Lower leg skin (tissue), 4 donors: ENCODE measurements at regions of chr9 and their contacts with region 1.

Region 1: DNA sequence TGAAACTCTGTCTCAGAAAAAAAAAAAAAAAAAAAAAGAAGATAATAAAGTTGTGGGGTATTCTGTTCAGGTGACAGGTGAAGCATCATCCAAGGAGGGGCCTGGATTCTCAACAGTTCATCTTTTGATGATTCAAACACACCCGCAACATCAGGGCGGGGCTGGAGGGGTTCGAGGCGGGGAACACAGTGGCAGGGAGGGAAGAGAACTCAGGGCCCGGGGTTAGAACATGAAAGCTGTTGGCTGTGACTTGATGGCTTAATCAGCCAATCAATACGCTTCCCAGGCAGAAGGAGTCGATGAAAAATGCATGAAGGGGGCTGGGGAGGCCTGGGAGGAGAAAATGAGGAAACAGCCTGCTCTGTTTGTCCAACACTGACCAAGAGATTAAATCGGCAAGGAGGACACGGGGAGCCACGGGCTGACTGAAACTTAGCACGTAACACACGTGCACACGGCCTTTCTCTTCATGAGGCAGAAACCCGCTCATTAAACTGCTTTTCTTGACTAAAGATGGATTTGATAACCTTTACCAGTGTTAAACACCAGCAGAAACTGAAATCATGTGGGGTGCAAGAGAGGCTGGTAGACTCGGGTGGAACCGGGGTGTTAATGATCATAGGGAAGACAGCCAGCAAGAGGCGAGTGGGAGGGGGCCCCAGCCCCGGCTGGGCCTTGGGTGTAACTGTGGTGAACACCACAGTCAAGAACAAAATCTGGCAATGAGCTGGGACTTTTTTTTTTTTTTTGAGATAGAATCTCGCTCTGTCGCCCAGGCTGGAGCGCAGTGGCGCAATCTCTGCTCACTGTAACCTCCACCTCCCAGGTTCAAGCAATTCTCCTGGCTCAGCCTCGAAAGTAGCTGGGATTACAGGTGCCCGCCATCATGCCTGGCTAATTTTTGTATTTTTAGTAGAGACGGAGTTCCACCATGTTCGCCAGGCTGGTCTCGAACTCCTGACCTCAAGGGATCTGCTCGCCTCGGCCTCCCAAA is 105.7 kb upstream of the RAPGEF1 start:
- DNase-seq: no peak
- H3K4me3 ChIP-seq: no peak overlapping the region
- CTCF ChIP-seq: no peak
- POLR2A ChIP-seq: no peak

Region 2: GRCh38 chr9:130343445-130343918 is 1502.1 kb before region 1 on chr9:
- intact Hi-C with region 1: loop called (anchors 5 kb)
- DNase-seq: no peak
- H3K4me3 ChIP-seq: no peak overlapping the region
- CTCF ChIP-seq: no peak
- POLR2A ChIP-seq: no peak